ENCODE measurements at regions of chr19 and their contacts with region 1.

Region 1: DNA sequence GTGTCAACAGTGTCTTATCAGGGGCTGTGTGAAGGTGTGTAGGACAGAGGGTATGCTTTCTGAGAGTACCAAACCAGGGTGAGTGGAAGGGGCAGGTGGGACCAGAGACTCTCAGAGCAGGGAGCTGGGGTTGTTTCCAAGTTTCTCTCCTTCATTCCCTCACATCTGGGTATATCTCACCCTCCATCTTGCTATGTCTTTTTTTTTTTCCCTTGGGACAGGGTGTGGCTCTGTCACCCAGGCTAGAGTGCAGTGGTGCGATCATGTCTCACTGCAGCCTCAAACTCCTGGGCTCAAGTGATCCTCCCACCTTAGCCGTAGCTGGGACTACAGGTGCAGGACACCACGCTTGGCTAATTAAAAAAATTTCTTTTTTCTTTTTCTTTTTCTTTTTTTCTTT is 10.6 kb downstream of the DAND5 start:
- DNase-seq: no peak
- ATAC-seq: no peak

Region 2: DNA sequence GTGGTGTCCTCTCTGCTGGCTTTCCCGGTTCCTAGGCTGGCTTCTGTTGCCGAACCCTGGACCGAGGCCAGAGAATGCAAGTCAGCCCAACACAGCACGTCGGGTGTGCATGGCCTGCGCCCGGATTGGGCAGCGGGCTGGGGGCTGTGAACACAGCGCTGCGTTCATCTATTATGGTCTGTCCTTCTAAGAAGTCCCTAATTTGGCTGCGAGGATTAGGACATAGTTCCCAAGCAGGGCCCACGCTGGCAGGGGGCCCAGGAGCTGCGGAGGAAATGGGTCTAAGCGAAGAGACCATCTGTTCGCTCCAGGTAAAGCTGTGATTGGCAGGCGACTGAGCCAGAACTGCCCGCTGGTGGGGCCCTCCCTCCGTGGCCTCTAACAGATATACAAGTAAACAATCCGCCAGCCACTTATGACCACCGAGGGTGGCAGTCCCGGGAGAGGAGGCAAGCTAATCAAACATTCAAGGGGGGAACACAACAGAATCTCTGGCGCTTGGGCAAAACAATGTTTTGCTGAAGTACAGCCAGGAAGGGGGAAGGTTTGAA is 66.9 kb before region 1 on chr19:
- intact Hi-C with region 1: no loop called
- DNase-seq: peak; percentile 79
- ATAC-seq: peak; percentile 86 to 96

Region 3: DNA sequence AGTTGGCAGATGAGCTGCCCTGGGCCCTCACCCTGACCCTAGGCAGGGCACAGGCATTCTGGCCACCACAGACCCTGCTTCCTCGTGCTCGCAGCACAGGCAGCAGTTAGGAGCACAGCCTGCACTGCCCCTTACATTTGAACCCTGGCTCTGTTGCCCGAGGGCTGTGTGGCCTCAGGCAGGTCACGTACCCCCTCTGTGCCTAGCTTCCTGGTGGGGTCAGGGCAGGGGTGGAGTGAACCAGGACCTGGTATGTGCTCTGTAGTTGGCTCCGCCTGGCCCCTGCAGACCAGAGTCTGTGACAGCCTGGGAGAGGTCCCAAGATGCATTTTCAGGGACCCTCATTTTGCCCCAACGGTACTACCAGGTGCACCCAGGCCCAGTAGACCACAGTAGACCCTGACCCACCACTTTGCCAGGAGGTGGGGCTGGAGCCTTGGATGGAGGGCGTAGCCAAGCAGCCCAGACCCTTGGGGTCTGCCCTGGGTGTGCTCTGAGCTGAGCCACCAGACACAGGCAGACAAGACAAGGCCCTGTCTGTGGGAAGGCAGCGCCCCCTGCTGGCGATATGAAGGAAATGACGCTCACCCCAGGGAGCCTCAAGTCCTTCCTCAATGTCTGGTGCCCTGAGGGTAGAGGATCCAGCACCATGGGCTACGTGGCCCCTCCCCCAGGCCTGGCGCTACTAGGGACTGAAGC is 113.6 kb after region 1 on chr19:
- intact Hi-C with region 1: loop called (anchors 2 kb)
- DNase-seq: peak; percentile 89
- ATAC-seq: peak; percentile 51 to 59